GM12878 (cell line): ENCODE measurements at regions of chr1 and their contacts with region 1.

Region 1: DNA sequence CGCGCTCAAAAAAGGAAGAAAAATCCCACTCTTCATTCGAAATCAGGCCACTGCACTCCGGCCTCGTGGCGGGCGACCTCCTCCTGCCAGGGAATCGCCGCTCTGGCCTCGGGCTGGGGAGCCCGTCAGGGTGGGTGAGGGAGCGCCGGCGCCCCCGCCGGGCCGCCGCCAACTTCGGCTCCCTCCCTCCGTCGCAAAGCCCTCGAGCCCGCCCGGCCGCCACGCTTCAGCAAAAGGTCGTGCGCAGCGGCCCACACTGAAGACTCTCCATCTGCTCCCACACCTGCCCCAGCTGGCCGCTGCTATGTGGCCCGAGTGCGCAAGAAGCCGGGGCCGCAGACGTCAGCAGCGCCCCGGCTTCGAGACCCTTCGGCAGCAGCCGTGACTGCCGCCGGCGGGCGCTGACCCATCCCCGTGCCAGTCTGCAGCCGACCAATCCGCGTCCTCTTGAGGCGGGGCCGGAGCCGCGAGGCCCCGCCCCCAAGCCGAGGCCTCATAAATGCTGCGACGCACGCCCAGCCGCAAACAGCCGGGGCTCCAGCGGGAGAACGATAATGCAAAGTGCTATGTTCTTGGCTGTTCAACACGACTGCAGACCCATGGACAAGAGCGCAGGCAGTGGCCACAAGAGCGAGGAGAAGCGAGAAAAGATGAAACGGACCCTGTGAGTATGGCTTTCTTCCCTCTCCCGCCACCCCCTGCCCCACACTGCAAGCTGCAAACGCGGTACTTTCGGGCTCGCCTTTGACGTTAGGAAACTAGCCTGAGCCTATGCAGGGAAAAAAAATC is at the start of gene RGS2:
- DNase-seq: peak; percentile 36
- ATAC-seq: peak; percentile 93
- H3K4me3 ChIP-seq: peak within 1 kb of the TSS; percentile 66
- H3K27ac ChIP-seq: no peak within 1 kb of the TSS
- H3K4me1 ChIP-seq: peaks cover 11% of the 10 kb centered on the region
- H3K27me3 ChIP-seq: peaks cover 0 to 5% of the 10 kb centered on the region in 2 experiments; a peak in 3 of 4 replicates
- CTCF ChIP-seq: no peak
- EP300 ChIP-seq: no peak
- POLR2A ChIP-seq: peak; percentile 99
- RAD21 ChIP-seq: no peak
- polyA plus RNA-seq, gene RGS2: 1.9 to 2.3 TPM

Region 2: GRCh38 chr1:192201303-192201702 is 607.4 kb before region 1 on chr1:
- CTCF ChIA-PET with region 1: no interaction called
- POLR2A ChIA-PET with region 1: no interaction called
- RAD21 ChIA-PET with region 1: no interaction called
- SMC1A ChIA-PET with region 1: no interaction called
- in situ Hi-C with region 1: no loop called
- intact Hi-C with region 1: no loop called
- DNase-seq: no peak
- ATAC-seq: no peak
- H3K4me3 ChIP-seq: no peak overlapping the region
- H3K27ac ChIP-seq: no peak overlapping the region
- H3K4me1 ChIP-seq: no peaks in the 10 kb centered on the region
- H3K27me3 ChIP-seq: no peaks in the 10 kb centered on the region
- CTCF ChIP-seq: no peak
- EP300 ChIP-seq: no peak
- POLR2A ChIP-seq: no peak
- RAD21 ChIP-seq: no peak

Region 3: GRCh38 chr1:192797891-192798290 is 10.8 kb before region 1 on chr1:
- CTCF ChIA-PET with region 1: interaction called, 15 read pairs
- POLR2A ChIA-PET with region 1: no interaction called
- RAD21 ChIA-PET with region 1: no interaction called
- SMC1A ChIA-PET with region 1: interaction called, 4 read pairs
- in situ Hi-C with region 1: no loop called
- intact Hi-C with region 1: no loop called
- DNase-seq: no peak
- ATAC-seq: no peak
- H3K4me3 ChIP-seq: no peak overlapping the region
- H3K27ac ChIP-seq: no peak overlapping the region
- H3K4me1 ChIP-seq: no peaks in the 10 kb centered on the region
- H3K27me3 ChIP-seq: no peaks in the 10 kb centered on the region; a peak in 1 of 4 replicates
- CTCF ChIP-seq: no peak
- EP300 ChIP-seq: no peak
- POLR2A ChIP-seq: no peak
- RAD21 ChIP-seq: no peak

Region 4: GRCh38 chr1:193019442-193020026 is 210.8 kb after region 1 on chr1:
- CTCF ChIA-PET with region 1: interaction called, 142 read pairs
- POLR2A ChIA-PET with region 1: no interaction called
- RAD21 ChIA-PET with region 1: interaction called, 56 read pairs
- SMC1A ChIA-PET with region 1: interaction called, 62 read pairs
- in situ Hi-C with region 1: loop called (anchors 5 kb)
- intact Hi-C with region 1: loop called (anchors 1 kb)
- DNase-seq: no peak
- ATAC-seq: peak; percentile 76
- H3K4me3 ChIP-seq: no peak overlapping the region
- H3K27ac ChIP-seq: no peak overlapping the region
- H3K4me1 ChIP-seq: no peaks in the 10 kb centered on the region
- H3K27me3 ChIP-seq: no peaks in the 10 kb centered on the region
- CTCF ChIP-seq: peak; percentile 22 to 53 (median 33); a peak in 4 of 6 replicates
- EP300 ChIP-seq: no peak
- POLR2A ChIP-seq: no peak
- RAD21 ChIP-seq: peak; percentile 62

Region 5: GRCh38 chr1:193031438-193031837 is 222.7 kb after region 1 on chr1:
- CTCF ChIA-PET with region 1: interaction called, 25 read pairs
- POLR2A ChIA-PET with region 1: no interaction called
- RAD21 ChIA-PET with region 1: interaction called, 6 read pairs
- SMC1A ChIA-PET with region 1: interaction called, 11 read pairs
- in situ Hi-C with region 1: no loop called
- intact Hi-C with region 1: no loop called
- DNase-seq: no peak
- ATAC-seq: peak; percentile 84
- H3K4me3 ChIP-seq: no peak overlapping the region
- H3K27ac ChIP-seq: no peak overlapping the region
- H3K4me1 ChIP-seq: no peaks in the 10 kb centered on the region
- H3K27me3 ChIP-seq: no peaks in the 10 kb centered on the region
- CTCF ChIP-seq: peak in 2 of 3 experiments; percentile 24; a peak in 3 of 6 replicates
- EP300 ChIP-seq: no peak
- POLR2A ChIP-seq: no peak
- RAD21 ChIP-seq: 0 out of 2 replicates have a peak, but pooled peaks have one; percentile 7

Region 6: GRCh38 chr1:193121616-193122593 is 313.2 kb after region 1 on chr1 and contains the start of gene CDC73:
- CTCF ChIA-PET with region 1: interaction called, 14 read pairs
- POLR2A ChIA-PET with region 1: interaction called, 3 read pairs
- RAD21 ChIA-PET with region 1: interaction called, 8 read pairs
- SMC1A ChIA-PET with region 1: interaction called, 10 read pairs
- in situ Hi-C with region 1: loop called (anchors 10 kb)
- intact Hi-C with region 1: loop called (anchors 2 kb)
- DNase-seq: peak; percentile 89
- ATAC-seq: peak; percentile 93
- H3K4me3 ChIP-seq: peak within 1 kb of the TSS; percentile 91
- H3K27ac ChIP-seq: peak within 1 kb of the TSS; percentile 92
- H3K4me1 ChIP-seq: no peaks in the 10 kb centered on the region; the same call in 1 of the 2 replicates
- H3K27me3 ChIP-seq: no peaks in the 10 kb centered on the region
- CTCF ChIP-seq: peak; percentile 87 to 96 (median 88)
- EP300 ChIP-seq: peak in 1 of 2 experiments; percentile 25; a peak in 1 of 4 replicates
- POLR2A ChIP-seq: peak; percentile 97
- RAD21 ChIP-seq: peak; percentile 74
- polyA plus RNA-seq, gene CDC73: 21.0 to 21.3 TPM